Activated CD4-positive, alpha-beta T cell treated with anti-CD3 and anti-CD28 coated beads, Interleukin-2, amount 10 ng/mL, durations not matched to agents 24 days and 14 days (primary cell): ENCODE measurements at regions of chr17 and their contacts with region 1.

Region 1: GRCh38 chr17:75338335-75338734 is 49.1 kb upstream of the SLC25A19 start:
- DNase-seq: peak; percentile 75
- H3K4me3 Mint-ChIP-seq: peak overlapping the region; percentile 69
- H3K27ac Mint-ChIP-seq: peak overlapping the region; percentile 86
- H3K4me1 Mint-ChIP-seq: peaks cover 61% of the 10 kb centered on the region
- H3K27me3 Mint-ChIP-seq: no peaks in the 10 kb centered on the region

Region 2: GRCh38 chr17:75352079-75352569 is 13.8 kb after region 1 on chr17:
- intact Hi-C with region 1: loop called (anchors 1 kb)
- DNase-seq: no peak
- H3K4me3 Mint-ChIP-seq: no peak overlapping the region
- H3K27ac Mint-ChIP-seq: no peak overlapping the region
- H3K4me1 Mint-ChIP-seq: peaks cover 52% of the 10 kb centered on the region
- H3K27me3 Mint-ChIP-seq: no peaks in the 10 kb centered on the region